CD8-positive, alpha-beta memory T cell (primary cell): ENCODE measurements at regions of chr18 and their contacts with region 1.

Region 1: DNA sequence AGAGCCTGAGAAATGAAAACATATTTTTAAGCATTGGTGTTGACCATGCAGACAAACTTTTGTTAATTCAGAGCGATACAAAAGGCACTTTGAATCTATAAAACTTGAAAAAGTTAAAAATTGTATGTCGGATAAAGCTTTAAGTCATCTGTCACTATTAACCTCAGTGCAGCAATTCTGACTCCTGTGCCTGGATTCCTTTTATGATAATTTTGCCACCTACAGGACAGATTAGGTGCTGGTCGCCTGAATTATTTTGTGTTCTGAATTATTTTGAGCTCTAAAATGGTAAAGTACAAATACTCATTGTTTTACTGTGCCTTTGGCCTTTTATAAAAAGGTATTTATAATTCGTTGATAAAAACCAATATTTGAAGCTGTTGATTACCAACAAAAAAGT is 19.4 kb upstream of the RNF138 start:
- DNase-seq: peak in 1 of 5 donors; percentile 37
- H3K4me3 ChIP-seq: no peak overlapping the region
- H3K4me3 Mint-ChIP-seq: no peak overlapping the region
- H3K27ac ChIP-seq: no peak overlapping the region
- H3K27ac Mint-ChIP-seq: peak overlapping the region in 6 of 8 donors; percentile 12 to 71 (median 37)
- H3K4me1 ChIP-seq: no peaks in the 10 kb centered on the region
- H3K4me1 Mint-ChIP-seq: peaks cover 6 to 30% (median 17%) of the 10 kb centered on the region in 3 donors
- H3K27me3 ChIP-seq: no peaks in the 10 kb centered on the region
- H3K27me3 Mint-ChIP-seq: no peaks in the 10 kb centered on the region

Region 2: DNA sequence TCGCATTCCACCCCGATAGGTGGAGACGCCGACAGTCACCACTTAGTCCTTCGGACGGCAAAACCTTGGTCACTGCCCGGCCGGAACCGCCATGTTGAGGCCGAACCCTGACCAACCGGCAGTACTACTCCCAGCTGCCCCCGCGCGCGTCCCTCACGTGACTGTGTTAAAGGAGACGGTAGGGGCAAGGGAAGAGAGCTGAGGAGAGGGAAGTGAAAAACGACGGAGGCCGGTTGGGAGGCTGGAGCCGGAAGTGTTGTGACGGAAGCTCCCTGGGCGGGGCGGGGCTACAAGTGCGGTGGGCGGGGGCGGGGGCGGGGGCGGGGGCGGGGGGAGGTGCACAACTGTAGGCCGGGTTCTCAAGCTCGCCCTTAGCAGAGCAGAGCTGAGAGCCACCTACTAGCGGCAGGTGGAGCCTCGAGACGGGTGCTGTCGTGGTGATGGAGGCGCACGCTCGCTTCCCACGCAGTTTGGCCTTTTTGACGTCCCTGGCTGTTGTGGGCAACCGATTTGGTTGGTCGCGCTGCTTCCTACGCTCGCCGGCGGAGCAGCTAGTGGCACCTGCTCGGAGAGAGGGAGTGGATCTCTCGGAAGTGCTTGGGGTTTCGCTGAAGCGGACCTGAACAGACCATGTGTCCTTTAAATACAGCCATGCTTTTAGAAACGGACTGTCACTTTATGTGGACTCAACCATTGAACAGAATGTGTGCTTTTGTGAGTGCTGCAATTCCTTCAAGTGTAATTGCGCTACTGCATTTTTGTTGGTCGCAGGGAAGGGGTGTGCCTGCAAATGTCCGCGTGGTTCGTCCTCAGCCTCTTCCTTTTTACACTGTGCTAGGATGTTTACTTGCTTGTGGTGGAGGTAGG is 129.1 kb before region 1 on chr18 and contains the start of gene TRAPPC8:
- CTCF ChIA-PET with region 1: interaction called, 18 read pairs
- POLR2A ChIA-PET with region 1: interaction called, 11 read pairs
- DNase-seq: peak; percentile 86 to 95 (median 93)
- H3K4me3 ChIP-seq: peak within 1 kb of the TSS; percentile 90
- H3K4me3 Mint-ChIP-seq: peak within 1 kb of the TSS; percentile 97 to 100 (median 99)
- H3K27ac ChIP-seq: peak within 1 kb of the TSS; percentile 95
- H3K27ac Mint-ChIP-seq: peak within 1 kb of the TSS; percentile 95 to 100 (median 100)
- H3K4me1 ChIP-seq: peaks cover 26% of the 10 kb centered on the region
- H3K4me1 Mint-ChIP-seq: peaks cover 45 to 58% (median 56%) of the 10 kb centered on the region in 3 donors
- H3K27me3 ChIP-seq: no peaks in the 10 kb centered on the region
- H3K27me3 Mint-ChIP-seq: no peaks in the 10 kb centered on the region
- total RNA-seq, gene TRAPPC8: 29.2 to 34.8 TPM

Region 3: GRCh38 chr18:31954349-31954748 is 118.0 kb before region 1 on chr18:
- CTCF ChIA-PET with region 1: no interaction called
- POLR2A ChIA-PET with region 1: no interaction called
- DNase-seq: no peak
- H3K4me3 ChIP-seq: no peak overlapping the region
- H3K4me3 Mint-ChIP-seq: no peak overlapping the region
- H3K27ac ChIP-seq: no peak overlapping the region
- H3K27ac Mint-ChIP-seq: peak overlapping the region in 2 of 8 donors; percentile 17 to 25
- H3K4me1 ChIP-seq: no peaks in the 10 kb centered on the region
- H3K4me1 Mint-ChIP-seq: peaks cover 0 to 4% (median 0%) of the 10 kb centered on the region in 3 donors
- H3K27me3 ChIP-seq: no peaks in the 10 kb centered on the region
- H3K27me3 Mint-ChIP-seq: peaks cover 3 to 9% of the 10 kb centered on the region in 2 donors

Region 4: GRCh38 chr18:32086861-32087260 is 14.5 kb after region 1 on chr18:
- CTCF ChIA-PET with region 1: interaction called, 19 read pairs
- POLR2A ChIA-PET with region 1: interaction called, 9 read pairs
- DNase-seq: no peak
- H3K4me3 ChIP-seq: no peak overlapping the region
- H3K4me3 Mint-ChIP-seq: peak overlapping the region in 2 of 7 donors; percentile 12 to 13
- H3K27ac ChIP-seq: no peak overlapping the region
- H3K27ac Mint-ChIP-seq: peak overlapping the region in 5 of 8 donors; percentile 29 to 86 (median 70)
- H3K4me1 ChIP-seq: peaks cover 26% of the 10 kb centered on the region
- H3K4me1 Mint-ChIP-seq: peaks cover 42 to 55% (median 54%) of the 10 kb centered on the region in 3 donors
- H3K27me3 ChIP-seq: no peaks in the 10 kb centered on the region
- H3K27me3 Mint-ChIP-seq: peaks cover 0 to 8% of the 10 kb centered on the region in 2 donors

Region 5: GRCh38 chr18:32092422-32093101 is 20.2 kb after region 1 on chr18:
- CTCF ChIA-PET with region 1: interaction called, 19 read pairs
- POLR2A ChIA-PET with region 1: interaction called, 9 read pairs
- DNase-seq: peak; percentile 99 to 100 (median 99)
- H3K4me3 ChIP-seq: peak overlapping the region; percentile 86
- H3K4me3 Mint-ChIP-seq: peak overlapping the region; percentile 93 to 100 (median 97)
- H3K27ac ChIP-seq: peak overlapping the region; percentile 93
- H3K27ac Mint-ChIP-seq: peak overlapping the region; percentile 90 to 99 (median 98)
- H3K4me1 ChIP-seq: peaks cover 41% of the 10 kb centered on the region
- H3K4me1 Mint-ChIP-seq: peaks cover 47 to 57% (median 53%) of the 10 kb centered on the region in 3 donors
- H3K27me3 ChIP-seq: no peaks in the 10 kb centered on the region
- H3K27me3 Mint-ChIP-seq: peaks cover 0 to 2% of the 10 kb centered on the region in 2 donors

Region 6: GRCh38 chr18:32213693-32214092 is 141.4 kb after region 1 on chr18:
- CTCF ChIA-PET with region 1: no interaction called
- POLR2A ChIA-PET with region 1: no interaction called
- DNase-seq: no peak
- H3K4me3 ChIP-seq: no peak overlapping the region
- H3K4me3 Mint-ChIP-seq: no peak overlapping the region
- H3K27ac ChIP-seq: no peak overlapping the region
- H3K27ac Mint-ChIP-seq: no peak overlapping the region
- H3K4me1 ChIP-seq: no peaks in the 10 kb centered on the region
- H3K4me1 Mint-ChIP-seq: no peaks in the 10 kb centered on the region
- H3K27me3 ChIP-seq: no peaks in the 10 kb centered on the region
- H3K27me3 Mint-ChIP-seq: peaks cover 1 to 9% of the 10 kb centered on the region in 2 donors

Region 7: GRCh38 chr18:32284284-32284683 is 212.0 kb after region 1 on chr18:
- CTCF ChIA-PET with region 1: no interaction called
- POLR2A ChIA-PET with region 1: no interaction called
- DNase-seq: no peak
- H3K4me3 ChIP-seq: no peak overlapping the region
- H3K4me3 Mint-ChIP-seq: no peak overlapping the region
- H3K27ac ChIP-seq: no peak overlapping the region
- H3K27ac Mint-ChIP-seq: no peak overlapping the region
- H3K4me1 ChIP-seq: no peaks in the 10 kb centered on the region
- H3K4me1 Mint-ChIP-seq: no peaks in the 10 kb centered on the region
- H3K27me3 ChIP-seq: no peaks in the 10 kb centered on the region
- H3K27me3 Mint-ChIP-seq: peaks cover 3 to 6% of the 10 kb centered on the region in 2 donors